ENCODE measurements at regions of chr5 and their contacts with region 1.

Region 1: GRCh38 chr5:95846554-95847260 is 24.2 kb upstream of the GLRX start:
- DNase-seq: peak; percentile 76
- ATAC-seq: peak; percentile 80
- H3K4me3 ChIP-seq: no peak overlapping the region
- H3K27ac ChIP-seq: no peak overlapping the region
- H3K4me1 ChIP-seq: peaks cover 7% of the 10 kb centered on the region; the same call in 1 of the 2 replicates
- H3K27me3 ChIP-seq: no peaks in the 10 kb centered on the region
- CTCF ChIP-seq: peak; percentile 87

Region 2: DNA sequence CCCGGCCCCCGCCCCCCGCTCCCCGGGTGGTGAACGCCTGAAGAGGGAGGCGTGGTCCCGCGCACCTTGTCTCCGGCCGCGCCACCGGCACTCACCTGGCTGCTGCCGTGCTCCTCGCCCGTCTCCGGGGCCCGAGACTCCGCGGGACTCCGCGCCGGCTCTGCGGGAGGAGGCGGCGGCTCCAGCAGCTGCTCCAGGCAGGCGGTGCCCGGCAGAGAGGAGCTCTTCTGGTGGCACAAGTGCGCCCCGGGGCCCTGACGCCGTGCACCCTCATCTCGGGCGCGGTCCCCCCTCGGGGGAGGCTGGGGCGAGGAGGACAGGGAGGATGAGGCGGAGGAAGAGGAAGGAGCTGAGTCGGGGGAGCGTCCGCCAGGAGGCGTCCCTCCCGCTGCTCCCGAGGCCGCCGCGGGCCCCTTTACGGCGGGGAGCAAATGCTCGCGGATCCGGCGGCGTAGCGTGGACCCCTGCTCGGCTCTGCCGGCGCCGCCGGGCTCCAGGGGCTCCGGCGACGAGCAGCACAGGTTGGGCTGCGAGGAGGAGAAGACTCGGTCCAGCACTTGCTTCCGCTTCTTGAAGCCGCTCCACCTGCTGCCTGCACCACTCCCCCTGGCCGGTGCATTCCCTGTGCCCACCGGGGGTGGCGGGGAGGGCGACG is 562.8 kb before region 1 on chr5:
- CTCF ChIA-PET with region 1: no interaction called
- POLR2A ChIA-PET with region 1: no interaction called
- intact Hi-C with region 1: loop called (anchors 10 kb)
- DNase-seq: peak; percentile 27
- ATAC-seq: peak; percentile 56
- H3K4me3 ChIP-seq: peak overlapping the region; percentile 71
- H3K27ac ChIP-seq: no peak overlapping the region
- H3K4me1 ChIP-seq: peaks cover 5% of the 10 kb centered on the region; the same call in 1 of the 2 replicates
- H3K27me3 ChIP-seq: peaks cover 49% of the 10 kb centered on the region
- CTCF ChIP-seq: peak; percentile 53

Region 3: DNA sequence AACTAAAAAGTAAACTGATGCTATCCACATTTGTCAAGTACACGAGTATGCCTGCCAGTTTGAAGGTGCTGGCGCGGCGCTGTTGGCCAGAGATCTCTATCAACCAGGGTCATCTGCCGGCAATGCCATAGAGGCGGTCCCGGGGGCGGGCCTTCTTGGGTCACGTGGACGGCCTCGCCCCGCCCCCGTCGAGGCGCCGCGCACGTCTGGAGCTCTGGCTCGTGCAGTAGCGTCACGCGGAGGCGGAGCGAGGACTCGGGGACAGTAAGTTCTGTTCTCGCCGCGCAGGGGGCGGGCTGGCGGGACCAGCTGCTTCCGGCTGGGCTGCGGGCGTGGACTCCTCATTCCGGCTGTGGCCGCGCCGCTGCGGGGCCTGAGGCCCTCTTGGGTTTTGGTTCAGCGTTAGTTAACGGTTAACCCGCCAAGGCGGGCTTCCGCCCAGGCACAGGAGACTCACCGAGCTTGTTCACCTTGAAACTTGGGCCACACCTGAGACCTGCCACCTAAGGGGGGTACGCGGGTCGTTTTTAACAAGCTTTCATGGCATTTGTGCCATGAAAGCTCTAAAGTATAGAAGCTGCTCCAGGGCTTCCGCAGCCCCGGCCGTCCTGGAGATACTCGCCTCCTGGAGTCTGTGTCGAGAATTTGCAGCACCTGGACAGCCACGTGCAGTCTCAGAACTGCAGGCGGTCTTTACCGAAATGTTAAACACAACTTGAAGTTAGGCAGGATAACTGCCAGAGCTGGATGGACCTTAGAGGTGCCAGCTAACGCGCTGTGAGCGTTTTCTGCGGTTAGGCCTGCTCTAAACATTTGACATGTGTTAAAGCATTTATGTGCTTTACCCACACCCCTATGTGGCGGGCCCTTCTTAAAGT is 199.9 kb before region 1 on chr5 and contains the start of gene RFESD:
- CTCF ChIA-PET with region 1: no interaction called
- POLR2A ChIA-PET with region 1: no interaction called
- intact Hi-C with region 1: loop called (anchors 1 kb)
- DNase-seq: peak; percentile 98
- ATAC-seq: peak; percentile 95
- H3K4me3 ChIP-seq: peak within 1 kb of the TSS; percentile 74
- H3K27ac ChIP-seq: peak within 1 kb of the TSS; percentile 64
- H3K4me1 ChIP-seq: peaks cover 12% of the 10 kb centered on the region
- H3K27me3 ChIP-seq: no peaks in the 10 kb centered on the region
- CTCF ChIP-seq: peak; percentile 22; the same call in 1 of the 2 replicates
- total RNA-seq, gene RFESD: 0.36 and 2.4 TPM in 2 replicates

Region 4: DNA sequence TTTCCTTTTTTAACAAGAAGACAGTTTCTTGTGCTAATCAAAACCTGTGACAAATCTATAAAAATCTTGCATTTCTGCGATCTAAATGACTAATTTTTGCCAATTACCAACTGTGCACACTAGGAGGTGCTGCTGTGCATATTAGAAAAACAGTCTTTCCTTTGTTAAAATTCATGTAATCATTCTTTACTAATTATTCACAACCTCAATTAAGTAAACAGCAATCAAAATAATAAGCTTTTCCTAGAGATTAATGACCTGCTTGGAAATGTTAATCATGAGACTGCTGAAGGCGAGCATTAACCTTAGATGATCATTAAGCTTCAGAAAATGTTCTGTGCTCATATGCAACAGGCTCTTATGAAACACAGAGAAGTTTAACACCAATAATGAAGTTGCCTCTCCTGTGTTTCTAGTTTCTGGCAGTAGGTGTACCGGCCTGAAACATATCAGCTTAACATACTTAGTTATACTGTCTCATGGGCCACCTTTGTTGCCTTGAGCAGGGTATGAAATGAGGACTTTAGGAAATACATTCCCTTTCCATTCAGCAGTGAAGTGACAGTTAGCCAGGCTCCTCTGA is 182.4 kb before region 1 on chr5:
- CTCF ChIA-PET with region 1: interaction called, 3 read pairs
- POLR2A ChIA-PET with region 1: no interaction called
- intact Hi-C with region 1: loop called (anchors 2 kb)
- DNase-seq: peak; percentile 63
- ATAC-seq: peak; percentile 49
- H3K4me3 ChIP-seq: no peak overlapping the region
- H3K27ac ChIP-seq: no peak overlapping the region
- H3K4me1 ChIP-seq: no peaks in the 10 kb centered on the region; the same call in 1 of the 2 replicates
- H3K27me3 ChIP-seq: no peaks in the 10 kb centered on the region
- CTCF ChIP-seq: peak; percentile 93

Region 5: DNA sequence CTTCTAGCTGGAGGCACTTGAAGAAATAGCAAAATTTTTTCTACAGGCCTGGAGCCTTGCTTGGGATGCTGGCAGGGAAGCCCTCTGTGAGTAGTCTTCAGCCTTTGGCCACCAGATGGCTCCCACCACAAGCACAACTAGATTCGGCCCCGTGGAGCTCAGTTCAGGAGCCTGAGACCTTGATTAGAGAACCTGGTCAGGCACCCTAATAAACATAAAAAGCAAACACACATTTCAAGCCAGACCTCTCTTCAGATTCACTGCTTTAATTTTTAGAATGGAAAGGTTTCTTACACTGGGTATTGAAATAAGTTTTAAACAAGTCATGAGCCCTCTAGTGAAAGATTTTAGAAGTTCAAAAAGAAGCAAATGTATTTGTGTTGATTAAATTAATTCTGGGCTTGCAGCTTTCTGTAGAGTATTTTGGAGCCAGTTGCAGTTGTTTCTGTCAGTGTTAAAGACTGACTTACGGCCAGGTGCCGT is 65.6 kb before region 1 on chr5:
- CTCF ChIA-PET with region 1: interaction called, 8 read pairs
- POLR2A ChIA-PET with region 1: no interaction called
- intact Hi-C with region 1: loop called (anchors 1 kb)
- DNase-seq: peak; percentile 73
- ATAC-seq: peak; percentile 100
- H3K4me3 ChIP-seq: no peak overlapping the region
- H3K27ac ChIP-seq: no peak overlapping the region
- H3K4me1 ChIP-seq: no peaks in the 10 kb centered on the region
- H3K27me3 ChIP-seq: no peaks in the 10 kb centered on the region
- CTCF ChIP-seq: peak; percentile 95

Region 6: GRCh38 chr5:95822542-95823181 is 24.0 kb before region 1 on chr5 and contains the start of gene GLRX:
- CTCF ChIA-PET with region 1: interaction called, 3 read pairs
- POLR2A ChIA-PET with region 1: interaction called, 4 read pairs
- intact Hi-C with region 1: loop called (anchors 1 kb)
- DNase-seq: peak; percentile 91
- ATAC-seq: peak; percentile 70
- H3K4me3 ChIP-seq: peak within 1 kb of the TSS; percentile 73
- H3K27ac ChIP-seq: peak within 1 kb of the TSS; percentile 96
- H3K4me1 ChIP-seq: peaks cover 34% of the 10 kb centered on the region
- H3K27me3 ChIP-seq: no peaks in the 10 kb centered on the region
- CTCF ChIP-seq: no peak
- total RNA-seq, gene GLRX: 24.6 and 27.4 TPM in 2 replicates